Activated CD4-positive, alpha-beta T cell treated with anti-CD3 and anti-CD28 coated beads, Interleukin-2, amount 10 ng/mL, durations not matched to agents 24 days and 14 days (primary cell): ENCODE measurements at regions of chr2 and their contacts with region 1.

Region 1: GRCh38 chr2:119678998-119679710 is at the start of gene TMEM177:
- DNase-seq: peak; percentile 98
- H3K4me3 Mint-ChIP-seq: peak within 1 kb of the TSS; percentile 87
- H3K27ac Mint-ChIP-seq: peak within 1 kb of the TSS; percentile 76
- H3K4me1 Mint-ChIP-seq: peaks cover 31% of the 10 kb centered on the region
- H3K27me3 Mint-ChIP-seq: peaks cover 12% of the 10 kb centered on the region
- total RNA-seq, gene TMEM177: 19.0 and 20.6 TPM in 2 replicates

Region 2: GRCh38 chr2:119617455-119617854 is 61.7 kb before region 1 on chr2:
- intact Hi-C with region 1: no loop called
- DNase-seq: no peak
- H3K4me3 Mint-ChIP-seq: no peak overlapping the region
- H3K27ac Mint-ChIP-seq: no peak overlapping the region
- H3K4me1 Mint-ChIP-seq: no peaks in the 10 kb centered on the region
- H3K27me3 Mint-ChIP-seq: no peaks in the 10 kb centered on the region

Region 3: DNA sequence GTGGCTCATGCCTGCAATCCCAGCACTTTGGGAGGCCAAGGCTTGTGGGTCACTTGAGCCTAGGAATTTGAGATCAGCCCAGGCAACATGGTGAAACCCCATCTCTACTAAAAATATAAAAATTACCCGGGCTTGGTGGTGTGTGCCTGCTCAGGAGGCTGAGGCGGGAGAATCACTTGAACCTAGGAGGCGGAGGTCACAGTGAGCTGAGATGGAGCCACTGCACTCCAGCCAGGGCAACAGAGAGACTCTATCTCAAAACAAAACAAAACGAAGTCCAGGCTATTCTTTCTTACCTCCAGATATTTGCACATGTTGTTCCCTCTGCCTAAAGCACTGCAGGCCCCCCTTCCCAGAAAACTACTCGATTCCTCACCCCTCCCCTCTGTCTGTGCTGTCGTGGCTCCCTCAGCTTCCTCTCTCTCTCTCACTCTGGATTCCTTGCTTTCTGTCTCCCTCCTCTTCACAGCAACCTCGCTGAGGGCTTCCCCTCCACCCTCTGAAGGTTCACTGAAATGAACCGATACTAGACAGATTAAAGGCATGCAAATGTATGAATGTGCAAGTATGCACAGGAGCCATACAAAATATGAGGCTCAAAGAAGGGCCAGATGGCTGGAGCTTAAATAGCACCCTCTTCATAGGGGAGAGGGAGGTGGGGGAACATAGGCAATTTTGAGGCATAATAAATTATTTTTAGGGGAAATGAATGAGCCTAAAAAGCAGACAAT is 18.3 kb after region 1 on chr2:
- intact Hi-C with region 1: loop called (anchors 2 kb)
- DNase-seq: no peak
- H3K4me3 Mint-ChIP-seq: peak overlapping the region; percentile 30
- H3K27ac Mint-ChIP-seq: peak overlapping the region; percentile 6
- H3K4me1 Mint-ChIP-seq: peaks cover 12% of the 10 kb centered on the region
- H3K27me3 Mint-ChIP-seq: no peaks in the 10 kb centered on the region

Region 4: DNA sequence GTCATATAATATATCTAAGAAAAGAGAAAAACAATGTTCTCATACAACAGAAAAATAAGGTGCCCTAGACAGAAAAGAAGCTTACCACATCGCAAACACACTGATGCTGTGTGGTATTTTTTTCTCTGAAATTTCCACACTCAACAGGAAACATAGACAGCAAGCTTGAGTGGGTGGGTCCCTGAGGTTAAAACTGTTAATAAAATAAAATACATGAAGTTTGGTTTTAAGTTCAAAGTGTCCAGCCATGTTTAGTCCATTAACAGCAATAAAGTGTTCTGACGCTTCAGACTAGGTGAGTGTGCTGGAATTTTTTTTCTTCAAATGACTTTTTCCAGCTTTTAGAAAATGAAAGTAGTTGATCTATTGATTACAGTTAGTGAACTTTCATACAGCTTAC is 250.4 kb after region 1 on chr2:
- intact Hi-C with region 1: no loop called
- DNase-seq: peak; percentile 84
- H3K4me3 Mint-ChIP-seq: peak overlapping the region; percentile 75
- H3K27ac Mint-ChIP-seq: peak overlapping the region; percentile 85
- H3K4me1 Mint-ChIP-seq: peaks cover 45% of the 10 kb centered on the region
- H3K27me3 Mint-ChIP-seq: no peaks in the 10 kb centered on the region

Region 5: DNA sequence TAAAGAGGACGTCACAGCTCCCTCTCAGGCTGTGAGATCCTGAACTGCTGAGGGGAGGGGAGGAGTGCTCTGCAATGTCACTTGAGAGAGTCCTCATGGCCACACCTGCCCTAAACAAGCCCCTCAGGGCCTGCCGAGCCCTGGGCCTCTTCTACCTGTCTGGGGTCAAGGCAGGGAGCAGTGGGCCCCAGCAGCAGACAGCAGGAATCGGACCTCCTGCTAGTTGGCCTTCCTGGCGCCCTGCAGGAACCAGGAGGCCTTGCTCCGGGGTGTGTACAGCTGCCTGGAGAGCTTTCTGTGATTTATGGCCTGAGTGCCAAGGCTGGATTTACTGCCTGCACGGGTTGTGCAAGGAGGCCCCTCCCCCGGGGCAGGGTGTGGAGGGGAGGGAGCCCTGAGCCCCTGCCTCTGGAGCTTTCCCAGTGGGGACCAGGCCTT is 566.2 kb after region 1 on chr2:
- intact Hi-C with region 1: no loop called
- DNase-seq: no peak
- H3K4me3 Mint-ChIP-seq: no peak overlapping the region
- H3K27ac Mint-ChIP-seq: no peak overlapping the region
- H3K4me1 Mint-ChIP-seq: peaks cover 24% of the 10 kb centered on the region
- H3K27me3 Mint-ChIP-seq: peaks cover 4% of the 10 kb centered on the region